Activated T-helper 2 cell treated with anti-CD3 and anti-CD28 coated beads, Interferon-gamma antibody, Interleukin-2, Interleukin-4, amounts not matched to agents 10 μg/mL and 5 μg/mL and 100 μg/mL, durations not matched to agents 14 hours and 24 hours and 36 hours (primary cell): ENCODE measurements at regions of chr3 and their contacts with region 1.

Region 1: DNA sequence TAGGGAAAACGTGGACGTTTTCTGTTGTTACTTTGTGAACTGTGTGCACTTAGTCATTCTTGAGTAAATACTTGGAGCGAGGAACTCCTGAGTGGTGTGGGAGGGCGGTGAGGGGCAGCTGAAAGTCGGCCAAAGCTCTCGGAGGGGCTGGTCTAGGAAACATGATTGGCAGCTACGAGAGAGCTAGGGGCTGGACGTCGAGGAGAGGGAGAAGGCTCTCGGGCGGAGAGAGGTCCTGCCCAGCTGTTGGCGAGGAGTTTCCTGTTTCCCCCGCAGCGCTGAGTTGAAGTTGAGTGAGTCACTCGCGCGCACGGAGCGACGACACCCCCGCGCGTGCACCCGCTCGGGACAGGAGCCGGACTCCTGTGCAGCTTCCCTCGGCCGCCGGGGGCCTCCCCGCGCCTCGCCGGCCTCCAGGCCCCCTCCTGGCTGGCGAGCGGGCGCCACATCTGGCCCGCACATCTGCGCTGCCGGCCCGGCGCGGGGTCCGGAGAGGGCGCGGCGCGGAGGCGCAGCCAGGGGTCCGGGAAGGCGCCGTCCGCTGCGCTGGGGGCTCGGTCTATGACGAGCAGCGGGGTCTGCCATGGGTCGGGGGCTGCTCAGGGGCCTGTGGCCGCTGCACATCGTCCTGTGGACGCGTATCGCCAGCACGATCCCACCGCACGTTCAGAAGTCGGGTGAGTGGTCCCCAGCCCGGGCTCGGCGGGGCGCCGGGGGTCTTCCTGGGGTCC is at the start of gene TGFBR2:
- DNase-seq: peak; percentile 75
- H3K4me3 Mint-ChIP-seq: peak within 1 kb of the TSS; percentile 94
- H3K27ac Mint-ChIP-seq: peak within 1 kb of the TSS; percentile 97
- H3K4me1 Mint-ChIP-seq: peaks cover 63% of the 10 kb centered on the region
- H3K27me3 Mint-ChIP-seq: no peaks in the 10 kb centered on the region
- total RNA-seq, gene TGFBR2: 19.5 and 19.8 TPM in 2 replicates

Region 2: DNA sequence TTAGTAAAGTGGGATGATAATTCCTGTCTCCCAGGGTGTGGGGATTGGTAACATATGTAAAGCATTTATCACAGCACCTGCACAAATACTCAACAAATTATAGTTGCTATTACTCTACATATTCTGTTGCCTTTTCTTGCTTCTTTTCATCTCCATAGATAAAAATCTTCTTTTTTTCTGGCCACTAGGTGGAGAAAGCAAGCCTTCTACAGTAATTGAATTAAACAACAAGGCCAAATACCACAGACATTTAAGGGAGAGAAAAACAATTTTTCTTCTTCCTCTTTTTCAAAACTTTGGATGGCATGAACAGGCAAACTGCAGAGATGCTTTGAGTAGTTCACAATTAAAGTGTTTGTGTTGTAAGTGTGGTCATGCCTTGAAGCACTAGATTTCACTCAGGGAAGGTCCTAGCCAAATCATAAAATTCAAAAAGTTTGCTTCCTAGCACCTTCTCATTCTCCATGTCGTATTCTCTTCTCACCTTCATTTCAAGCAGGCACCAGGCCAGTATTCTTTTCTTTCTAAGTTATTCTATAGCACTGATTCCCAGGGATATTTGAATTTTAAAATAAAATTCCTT is 493.5 kb before region 1 on chr3:
- intact Hi-C with region 1: loop called (anchors 10 kb)
- DNase-seq: no peak
- H3K4me3 Mint-ChIP-seq: no peak overlapping the region
- H3K27ac Mint-ChIP-seq: no peak overlapping the region
- H3K4me1 Mint-ChIP-seq: peaks cover 3% of the 10 kb centered on the region
- H3K27me3 Mint-ChIP-seq: peaks cover 32% of the 10 kb centered on the region

Region 3: DNA sequence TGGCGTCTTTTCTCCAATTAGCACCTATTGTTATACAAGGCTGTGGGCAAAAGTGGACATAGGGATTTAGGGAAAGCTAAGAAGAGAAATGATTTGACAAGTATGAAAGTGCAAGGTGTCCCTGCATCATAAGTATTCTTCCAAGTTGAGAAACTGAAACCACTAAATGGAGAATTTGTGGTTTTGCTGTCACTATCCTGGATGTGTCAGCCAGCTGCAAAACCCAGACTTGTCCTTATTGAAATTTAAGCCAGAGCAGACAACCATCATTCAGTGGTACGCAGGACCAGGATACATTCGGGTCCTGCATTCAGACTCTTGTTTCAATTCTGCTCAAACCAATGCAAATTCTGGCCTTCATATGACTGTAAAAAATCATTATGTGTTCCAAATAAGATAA is 384.8 kb before region 1 on chr3:
- intact Hi-C with region 1: loop called (anchors 5 kb)
- DNase-seq: no peak
- H3K4me3 Mint-ChIP-seq: no peak overlapping the region
- H3K27ac Mint-ChIP-seq: no peak overlapping the region
- H3K4me1 Mint-ChIP-seq: peaks cover 35% of the 10 kb centered on the region
- H3K27me3 Mint-ChIP-seq: peaks cover 4% of the 10 kb centered on the region

Region 4: GRCh38 chr3:30475038-30475808 is 131.2 kb before region 1 on chr3:
- intact Hi-C with region 1: loop called (anchors 5 kb)
- DNase-seq: no peak
- H3K4me3 Mint-ChIP-seq: no peak overlapping the region
- H3K27ac Mint-ChIP-seq: no peak overlapping the region
- H3K4me1 Mint-ChIP-seq: peaks cover 34% of the 10 kb centered on the region
- H3K27me3 Mint-ChIP-seq: no peaks in the 10 kb centered on the region

Region 5: DNA sequence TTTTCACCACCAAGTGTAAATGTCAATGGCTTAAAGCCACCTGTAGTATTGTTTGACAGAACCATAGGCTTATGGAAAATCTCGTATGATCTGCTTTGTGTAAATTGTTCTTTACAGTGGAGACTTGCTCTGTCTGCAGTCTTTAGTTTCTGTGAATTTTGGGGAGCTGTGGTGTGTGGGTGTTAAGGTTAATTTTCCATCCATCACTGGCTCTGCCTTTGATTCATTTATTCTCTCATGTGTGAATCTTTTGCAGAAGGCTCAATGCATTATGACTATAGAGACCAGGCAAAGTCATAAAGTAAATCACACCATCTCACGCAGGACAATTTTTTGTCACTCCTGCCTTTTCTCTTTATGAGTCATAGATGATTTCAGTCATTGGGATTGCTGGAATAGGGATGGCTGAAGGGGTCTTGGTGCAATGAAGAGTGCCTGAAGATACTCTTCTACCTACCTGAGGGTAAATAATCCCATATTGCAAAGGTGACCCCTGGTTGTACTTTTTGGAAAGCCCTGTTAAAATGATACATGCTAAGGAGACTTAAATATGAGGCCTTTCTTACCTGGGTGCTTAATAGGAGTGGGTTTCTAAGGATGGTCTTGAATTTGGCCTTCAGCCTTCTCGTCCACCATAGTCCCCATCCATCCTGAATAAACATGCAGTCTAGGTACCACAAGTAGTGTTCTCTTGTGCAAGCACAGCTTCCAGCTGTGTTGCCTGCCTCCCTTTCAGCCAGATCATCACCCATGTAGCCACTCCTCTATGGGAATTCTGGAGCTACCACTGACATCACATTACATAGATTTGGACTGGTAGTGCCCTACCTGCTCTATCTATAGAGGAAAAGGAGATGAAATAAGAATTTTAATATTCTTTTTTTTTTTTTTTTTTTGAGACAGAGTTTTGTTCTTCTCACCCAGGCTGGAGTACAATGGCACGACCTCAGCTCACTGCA is 14.2 kb after region 1 on chr3:
- intact Hi-C with region 1: loop called (anchors 2 kb)
- DNase-seq: no peak
- H3K4me3 Mint-ChIP-seq: peak overlapping the region; percentile 65
- H3K27ac Mint-ChIP-seq: peak overlapping the region; percentile 96
- H3K4me1 Mint-ChIP-seq: peaks cover 83% of the 10 kb centered on the region
- H3K27me3 Mint-ChIP-seq: no peaks in the 10 kb centered on the region